CD4-positive, alpha-beta T cell (primary cell): ENCODE measurements at regions of chr5 and their contacts with region 1.

Region 1: GRCh38 chr5:83076742-83077661 is at the starts of genes TMEM167A and XRCC4:
- DNase-seq: peak; percentile 81 to 98 (median 89)
- ATAC-seq: peak; percentile 98
- H3K4me3 ChIP-seq: peak within 1 kb of the TSS; percentile 76
- H3K4me3 Mint-ChIP-seq: peak within 1 kb of the TSS; percentile 94
- H3K27ac ChIP-seq: peak within 1 kb of the TSS; percentile 83 to 88
- H3K27ac Mint-ChIP-seq: peak within 1 kb of the TSS; percentile 95
- H3K4me1 ChIP-seq: peaks cover 18% of the 10 kb centered on the region
- H3K4me1 Mint-ChIP-seq: peaks cover 61% of the 10 kb centered on the region
- H3K27me3 ChIP-seq: no peaks in the 10 kb centered on the region
- H3K27me3 Mint-ChIP-seq: no peaks in the 10 kb centered on the region
- CTCF ChIP-seq: no peak
- total RNA-seq, gene TMEM167A: 33.8 to 37.1 TPM
- total RNA-seq, gene XRCC4: 1.8 TPM

Region 2: GRCh38 chr5:82278095-82278918 is 798.7 kb before region 1 on chr5 and contains the start of gene RPS23:
- CTCF ChIA-PET with region 1: no interaction called
- POLR2A ChIA-PET with region 1: interaction called, 9 read pairs
- intact Hi-C with region 1: loop called in 1 of 2 experiments (anchors 5 kb)
- DNase-seq: peak; percentile 77 to 93 (median 84)
- ATAC-seq: peak; percentile 92
- H3K4me3 ChIP-seq: peak within 1 kb of the TSS; percentile 78
- H3K4me3 Mint-ChIP-seq: peak within 1 kb of the TSS; percentile 94
- H3K27ac ChIP-seq: peak within 1 kb of the TSS; percentile 62 to 63
- H3K27ac Mint-ChIP-seq: peak within 1 kb of the TSS; percentile 94
- H3K4me1 ChIP-seq: peaks cover 18% of the 10 kb centered on the region
- H3K4me1 Mint-ChIP-seq: peaks cover 29% of the 10 kb centered on the region
- H3K27me3 ChIP-seq: no peaks in the 10 kb centered on the region
- H3K27me3 Mint-ChIP-seq: no peaks in the 10 kb centered on the region
- CTCF ChIP-seq: no peak
- total RNA-seq, gene RPS23: 4,190 to 4,212 TPM

Region 3: DNA sequence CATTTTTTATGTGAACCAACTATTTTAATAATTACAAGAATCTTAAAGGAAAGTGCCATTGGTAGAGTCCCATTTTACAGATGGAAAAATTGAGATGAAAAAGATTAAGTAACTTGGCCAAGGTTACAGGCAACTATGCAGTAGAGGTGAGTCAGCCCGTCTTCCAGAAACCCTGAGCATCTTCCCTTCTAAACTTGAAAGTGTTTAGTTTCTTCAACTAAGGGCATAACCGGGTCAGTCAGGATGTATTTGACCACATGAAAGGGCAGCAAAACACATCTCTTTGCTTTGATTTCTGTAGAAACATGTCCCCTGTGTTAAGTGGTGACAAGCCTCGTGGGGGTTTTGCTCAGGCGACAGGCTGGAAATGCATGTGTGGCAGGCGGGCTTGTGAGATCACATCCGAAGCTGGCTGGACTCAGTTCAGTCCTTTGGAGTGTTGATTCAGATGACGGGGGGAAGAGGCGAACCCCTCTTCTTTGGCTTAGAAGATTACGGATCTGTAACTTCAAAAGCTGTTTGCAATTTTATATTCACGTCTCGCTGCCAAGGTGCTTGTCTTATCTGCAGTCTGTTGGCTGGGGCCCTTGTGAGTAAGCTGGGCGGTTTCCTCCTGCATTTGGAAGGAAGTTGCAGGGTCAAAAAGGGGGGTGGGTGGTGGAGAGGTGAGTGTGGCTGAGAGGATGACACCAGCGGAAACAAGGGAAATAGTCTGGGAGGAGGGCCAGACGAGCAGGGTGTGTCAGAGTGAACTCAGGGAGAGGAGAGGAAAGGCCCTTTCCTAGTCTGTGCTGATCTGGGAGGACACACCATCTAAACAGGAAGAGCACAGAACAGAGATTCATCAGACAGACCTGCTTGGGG is 720.0 kb before region 1 on chr5:
- CTCF ChIA-PET with region 1: no interaction called
- POLR2A ChIA-PET with region 1: interaction called, 8 read pairs
- intact Hi-C with region 1: loop called (anchors 5 kb)
- DNase-seq: peak; percentile 60 to 93 (median 73)
- ATAC-seq: peak; percentile 82
- H3K4me3 ChIP-seq: peak overlapping the region; percentile 30
- H3K4me3 Mint-ChIP-seq: peak overlapping the region; percentile 57
- H3K27ac ChIP-seq: peak overlapping the region; percentile 56 to 80
- H3K27ac Mint-ChIP-seq: peak overlapping the region; percentile 88
- H3K4me1 ChIP-seq: peaks cover 24% of the 10 kb centered on the region
- H3K4me1 Mint-ChIP-seq: peaks cover 40% of the 10 kb centered on the region
- H3K27me3 ChIP-seq: no peaks in the 10 kb centered on the region
- H3K27me3 Mint-ChIP-seq: no peaks in the 10 kb centered on the region
- CTCF ChIP-seq: no peak

Region 4: DNA sequence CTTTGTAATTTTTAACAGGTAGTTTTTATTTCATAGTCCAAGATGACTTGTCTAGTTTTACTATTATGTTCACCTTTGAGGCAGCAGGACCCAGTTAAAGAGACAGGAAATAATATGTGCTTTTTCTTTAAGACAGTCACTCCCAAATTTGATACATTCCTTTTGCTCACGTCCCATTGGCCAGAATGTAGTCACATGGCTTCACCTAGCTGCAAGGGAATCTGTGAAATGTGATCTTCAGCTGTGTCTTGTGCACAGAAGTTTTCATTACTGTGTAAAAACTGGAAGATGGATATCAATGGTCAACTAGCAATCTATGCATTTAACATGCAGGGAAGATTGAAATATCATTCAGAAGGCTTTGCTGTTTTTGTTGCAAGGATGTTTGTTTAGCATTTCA is 41.5 kb after region 1 on chr5:
- CTCF ChIA-PET with region 1: no interaction called
- POLR2A ChIA-PET with region 1: no interaction called
- intact Hi-C with region 1: loop called in 1 of 2 experiments (anchors 1 kb)
- DNase-seq: no peak
- ATAC-seq: no peak
- H3K4me3 ChIP-seq: no peak overlapping the region
- H3K4me3 Mint-ChIP-seq: no peak overlapping the region
- H3K27ac ChIP-seq: no peak overlapping the region
- H3K27ac Mint-ChIP-seq: no peak overlapping the region
- H3K4me1 ChIP-seq: no peaks in the 10 kb centered on the region
- H3K4me1 Mint-ChIP-seq: no peaks in the 10 kb centered on the region
- H3K27me3 ChIP-seq: no peaks in the 10 kb centered on the region
- H3K27me3 Mint-ChIP-seq: no peaks in the 10 kb centered on the region
- CTCF ChIP-seq: no peak